AG04449 (cell line): ENCODE measurements at regions of chr5 and their contacts with region 1.

Region 1: DNA sequence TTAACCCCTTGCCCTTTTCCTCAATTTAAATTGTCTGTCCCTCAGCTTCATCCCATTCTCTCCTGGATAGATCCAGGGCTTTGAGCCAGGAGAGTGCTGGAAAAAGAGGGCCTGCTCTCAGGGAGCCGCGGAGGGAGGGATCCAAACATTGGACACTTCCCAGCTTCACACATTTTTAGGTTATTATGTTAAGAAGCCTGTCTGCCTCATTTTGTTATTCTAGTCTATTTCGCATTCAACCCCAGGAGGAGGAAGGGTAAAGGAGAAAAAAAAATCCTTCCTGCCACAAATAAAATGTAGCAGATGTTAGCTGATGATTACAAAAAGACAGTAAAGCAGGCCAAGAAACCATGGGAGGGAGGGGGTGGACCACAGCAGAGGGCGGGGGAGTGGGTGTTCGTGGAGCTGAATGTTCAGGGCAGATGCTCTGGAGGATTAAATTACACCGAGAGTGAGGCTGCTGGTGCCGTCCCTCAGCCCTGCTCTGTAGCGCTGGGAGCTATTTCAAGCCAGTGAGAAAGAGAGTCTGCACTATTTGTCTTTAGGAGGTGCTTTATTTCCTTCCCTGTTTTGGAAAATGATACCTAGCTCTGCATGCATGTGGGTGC is 60.6 kb upstream of the ZFR start:
- DNase-seq: peak; percentile 92
- H3K4me3 ChIP-seq: peak overlapping the region; percentile 46
- CTCF ChIP-seq: no peak

Region 2: DNA sequence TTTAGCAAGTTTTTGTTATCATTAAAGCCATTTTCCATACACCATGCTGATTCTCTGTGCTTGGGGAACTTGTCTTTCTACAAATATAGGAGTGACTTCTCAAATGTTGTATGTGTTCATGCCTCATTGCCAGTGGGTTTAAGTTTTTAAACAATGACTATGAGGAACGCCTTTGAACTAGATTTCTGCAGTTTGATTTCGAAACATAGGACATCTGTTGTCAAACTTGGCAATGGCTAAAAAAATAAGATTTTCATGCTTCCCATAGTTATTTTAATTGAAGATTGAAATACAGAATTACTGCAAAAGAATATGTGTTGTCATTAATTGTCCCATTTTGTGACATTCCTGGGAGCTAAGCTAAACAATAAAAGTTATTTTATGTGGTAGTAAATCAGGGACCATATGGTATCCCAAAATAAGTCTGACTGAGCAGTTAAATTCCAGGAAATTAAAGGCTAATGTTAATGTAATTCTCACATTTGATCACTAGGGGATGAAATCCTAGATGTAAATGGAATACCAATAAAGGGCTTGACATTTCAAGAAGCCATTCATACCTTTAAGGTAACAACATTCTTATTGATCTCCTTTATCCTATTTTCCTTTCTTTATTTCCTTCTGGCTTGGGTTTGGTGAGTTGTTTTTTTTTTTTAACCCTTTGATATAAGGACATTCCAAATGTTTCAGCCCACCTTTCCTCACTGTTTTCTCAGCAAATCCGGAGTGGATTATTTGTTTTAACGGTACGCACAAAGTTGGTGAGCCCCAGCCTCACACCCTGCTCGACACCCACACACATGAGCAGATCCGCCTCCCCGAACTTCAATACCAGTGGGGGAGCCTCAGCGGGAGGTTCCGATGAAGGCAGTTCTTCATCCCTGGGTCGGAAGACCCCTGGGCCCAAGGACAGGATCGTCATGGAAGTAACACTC is 447.7 kb before region 1 on chr5:
- CTCF ChIA-PET with region 1: no interaction called
- POLR2A ChIA-PET with region 1: no interaction called
- DNase-seq: no peak
- H3K4me3 ChIP-seq: no peak overlapping the region
- CTCF ChIP-seq: no peak

Region 3: DNA sequence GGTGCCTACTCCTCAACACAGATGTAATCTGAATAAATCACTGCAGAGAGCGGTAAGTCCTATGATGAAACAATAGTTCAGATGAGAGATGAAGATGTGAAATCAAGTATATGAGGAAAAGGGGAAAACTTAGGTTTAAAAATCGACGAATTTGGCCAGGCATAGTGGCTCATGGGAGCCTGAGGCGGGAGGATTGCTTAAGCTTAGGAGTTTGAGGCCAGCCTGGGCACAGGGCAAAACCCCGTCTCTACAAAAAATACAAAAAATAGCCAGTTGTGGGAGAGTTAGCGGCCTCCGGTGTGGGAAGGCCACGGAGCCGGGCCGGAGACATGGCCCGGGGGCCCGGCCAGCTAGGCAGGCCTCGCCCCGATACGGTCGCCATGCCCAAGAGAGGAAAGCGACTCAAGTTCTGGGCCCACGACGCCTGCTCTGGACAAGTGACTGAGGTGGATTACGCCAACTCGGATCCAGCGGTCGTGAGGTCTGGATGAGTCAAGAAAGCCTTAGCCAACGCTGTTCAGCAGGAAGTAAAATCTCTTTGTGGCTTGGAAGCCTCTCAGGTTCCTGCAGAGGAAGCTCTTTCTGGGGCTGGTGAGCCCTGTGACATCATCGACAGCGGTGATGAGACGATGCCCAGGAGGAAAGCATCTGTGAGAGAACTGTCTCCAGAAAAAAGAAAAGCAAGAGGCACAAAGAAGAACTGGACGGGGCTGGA is 17.5 kb after region 1 on chr5:
- CTCF ChIA-PET with region 1: interaction called, 3 read pairs
- POLR2A ChIA-PET with region 1: interaction called, 11 read pairs
- DNase-seq: peak; percentile 71
- H3K4me3 ChIP-seq: no peak overlapping the region
- CTCF ChIP-seq: no peak

Region 4: DNA sequence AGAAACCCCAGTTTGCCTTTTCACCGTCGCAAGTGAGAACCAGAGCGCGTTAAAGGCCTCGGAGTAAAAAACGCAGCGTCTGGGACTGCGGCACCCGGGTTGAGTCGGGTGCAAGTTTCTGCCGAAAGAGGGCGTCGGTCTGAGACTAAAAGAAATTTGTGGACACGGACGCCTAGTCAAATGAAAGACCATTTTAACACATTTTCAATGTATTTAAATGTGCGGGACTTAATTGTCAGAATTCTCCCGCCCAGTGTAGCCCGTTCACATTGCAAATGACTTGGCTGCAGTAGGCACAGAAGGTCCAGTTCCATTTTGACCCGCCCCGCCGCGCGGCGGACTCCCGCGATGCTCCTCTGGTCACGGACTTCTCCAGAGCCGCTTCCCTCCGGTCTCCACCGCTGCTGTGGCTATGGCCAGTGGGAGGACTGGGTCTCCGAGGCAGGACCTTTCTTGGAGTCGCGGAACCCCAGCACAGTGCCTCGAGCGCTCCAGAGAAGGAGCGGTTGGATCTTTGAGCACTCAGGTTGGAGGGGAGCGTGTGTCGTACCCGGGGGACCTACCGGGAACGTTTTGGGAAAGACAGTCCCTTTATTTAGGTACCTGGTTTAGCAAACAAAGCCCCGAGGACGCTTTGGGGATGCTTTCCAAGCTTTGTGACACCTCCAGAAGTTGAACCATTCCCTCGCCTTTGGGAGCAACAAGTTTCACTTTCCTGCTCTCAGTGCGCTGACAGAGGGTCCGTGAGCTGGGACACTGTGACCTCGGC is 204.9 kb after region 1 on chr5:
- CTCF ChIA-PET with region 1: no interaction called
- POLR2A ChIA-PET with region 1: no interaction called
- DNase-seq: no peak
- H3K4me3 ChIP-seq: peak overlapping the region; percentile 84
- CTCF ChIP-seq: peak; percentile 69